ENCODE measurements at regions of chr1 and their contacts with region 1.

Region 1: GRCh38 chr1:223244366-223245103 is 101.5 kb upstream of the TLR5 start:
- DNase-seq: no peak
- ATAC-seq: no peak
- H3K4me3 ChIP-seq: no peak overlapping the region
- H3K27ac ChIP-seq: no peak overlapping the region
- H3K4me1 ChIP-seq: no peaks in the 10 kb centered on the region
- H3K27me3 ChIP-seq: no peaks in the 10 kb centered on the region
- CTCF ChIP-seq: peak; percentile 37

Region 2: GRCh38 chr1:223133824-223134435 is 110.6 kb before region 1 on chr1:
- intact Hi-C with region 1: loop called in 1 of 2 experiments (anchors 2 kb)
- DNase-seq: peak; percentile 84 to 91
- ATAC-seq: peak; percentile 83 to 89 (median 84)
- H3K4me3 ChIP-seq: peak overlapping the region; percentile 57
- H3K27ac ChIP-seq: peak overlapping the region; percentile 64
- H3K4me1 ChIP-seq: peaks cover 34% of the 10 kb centered on the region
- H3K27me3 ChIP-seq: no peaks in the 10 kb centered on the region
- CTCF ChIP-seq: peak; percentile 89